Naive thymus-derived CD8-positive, alpha-beta T cell (primary cell): ENCODE measurements at regions of chr20 and their contacts with region 1.

Region 1: GRCh38 chr20:44080646-44081267 is 106.2 kb downstream of the JPH2 start:
- DNase-seq: peak; percentile 50 to 87 (median 80)
- ATAC-seq: peak; percentile 96 to 98
- H3K4me3 Mint-ChIP-seq: peak overlapping the region in 7 of 10 donors; percentile 4 to 54 (median 26)
- H3K27ac Mint-ChIP-seq: peak overlapping the region; percentile 16 to 95 (median 86)
- H3K4me1 Mint-ChIP-seq: peaks cover 6 to 32% (median 20%) of the 10 kb centered on the region in 4 donors
- H3K27me3 Mint-ChIP-seq: no peaks in the 10 kb centered on the region

Region 2: GRCh38 chr20:44056010-44056698 is 24.6 kb before region 1 on chr20:
- POLR2A ChIA-PET with region 1: interaction called, 42 read pairs
- DNase-seq: peak; percentile 53 to 88 (median 76)
- ATAC-seq: peak; percentile 98 to 100
- H3K4me3 Mint-ChIP-seq: no peak overlapping the region
- H3K27ac Mint-ChIP-seq: peak overlapping the region in 8 of 10 donors; percentile 11 to 93 (median 70)
- H3K4me1 Mint-ChIP-seq: peaks cover 14 to 34% (median 17%) of the 10 kb centered on the region in 4 donors
- H3K27me3 Mint-ChIP-seq: peaks cover 0 to 1% (median 0%) of the 10 kb centered on the region in 5 donors

Region 3: DNA sequence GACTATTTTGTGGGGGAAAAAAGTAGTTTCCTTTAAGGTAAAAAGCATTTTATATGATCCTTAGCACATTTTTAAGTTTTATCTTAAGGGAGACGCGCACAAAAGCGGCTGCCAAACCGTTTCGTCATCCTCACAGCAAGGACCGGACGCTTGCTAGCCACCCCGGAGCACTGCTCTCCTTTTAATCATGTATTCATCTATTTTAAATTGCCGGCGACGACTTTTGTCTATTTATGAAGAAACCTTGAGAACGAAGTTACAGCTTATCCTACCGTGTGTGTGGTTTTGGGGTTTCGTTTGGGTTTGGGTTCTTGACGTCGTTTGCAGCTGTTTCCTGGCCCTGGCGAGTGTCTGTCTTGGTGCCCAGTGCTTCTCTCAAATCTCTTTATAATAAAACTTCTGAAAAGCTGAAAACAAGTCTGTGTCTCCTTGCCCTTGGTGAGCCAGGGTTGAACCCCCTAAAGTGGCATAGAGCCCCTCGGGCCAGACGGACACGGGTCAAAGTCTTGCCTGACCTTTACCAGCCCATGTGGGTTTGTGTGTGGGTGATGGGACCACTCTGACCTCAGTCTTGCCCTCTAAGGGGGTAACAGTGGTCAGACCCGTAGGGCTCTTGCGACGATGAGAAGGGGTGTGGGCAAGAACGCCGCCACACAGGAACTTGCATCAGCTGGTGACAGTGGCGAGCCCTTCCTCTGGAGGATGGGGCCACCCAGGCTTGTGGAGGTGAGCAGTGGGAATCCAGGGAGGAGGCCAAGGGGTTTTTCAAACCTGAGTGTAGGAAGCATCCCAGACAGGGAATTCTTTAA is 11.3 kb before region 1 on chr20:
- POLR2A ChIA-PET with region 1: interaction called, 39 read pairs
- DNase-seq: peak; percentile 49 to 97 (median 89)
- ATAC-seq: peak; percentile 59 to 62
- H3K4me3 Mint-ChIP-seq: peak overlapping the region; percentile 74 to 95 (median 90)
- H3K27ac Mint-ChIP-seq: peak overlapping the region; percentile 88 to 100 (median 100)
- H3K4me1 Mint-ChIP-seq: peaks cover 19 to 87% (median 78%) of the 10 kb centered on the region in 4 donors
- H3K27me3 Mint-ChIP-seq: peaks cover 0 to 2% (median 0%) of the 10 kb centered on the region in 5 donors